ENCODE measurements at regions of chr6 and their contacts with region 1.

Region 1: GRCh38 chr6:87701676-87702588 is at the start of gene AKIRIN2:
- DNase-seq: peak; percentile 97
- ATAC-seq: peak; percentile 73
- H3K4me3 ChIP-seq: peak within 1 kb of the TSS; percentile 96
- H3K27ac ChIP-seq: peak within 1 kb of the TSS; percentile 97
- H3K4me1 ChIP-seq: peaks cover 33% of the 10 kb centered on the region
- H3K27me3 ChIP-seq: no peaks in the 10 kb centered on the region
- CTCF ChIP-seq: no peak
- EP300 ChIP-seq: no peak
- POLR2A ChIP-seq: peak; percentile 94
- RAD21 ChIP-seq: no peak
- polyA plus RNA-seq, gene AKIRIN2: 12.7 to 16.8 TPM

Region 2: GRCh38 chr6:87093651-87094050 is 608.3 kb before region 1 on chr6:
- CTCF ChIA-PET with region 1: no interaction called
- POLR2A ChIA-PET with region 1: no interaction called
- RAD21 ChIA-PET with region 1: no interaction called
- SMC1A ChIA-PET with region 1: no interaction called
- in situ Hi-C with region 1: no loop called
- intact Hi-C with region 1: no loop called
- DNase-seq: no peak
- ATAC-seq: no peak
- H3K4me3 ChIP-seq: no peak overlapping the region
- H3K27ac ChIP-seq: no peak overlapping the region
- H3K4me1 ChIP-seq: no peaks in the 10 kb centered on the region
- H3K27me3 ChIP-seq: no peaks in the 10 kb centered on the region
- CTCF ChIP-seq: no peak
- EP300 ChIP-seq: no peak
- POLR2A ChIP-seq: no peak
- RAD21 ChIP-seq: no peak

Region 3: GRCh38 chr6:87574292-87574691 is 127.6 kb before region 1 on chr6:
- CTCF ChIA-PET with region 1: no interaction called
- POLR2A ChIA-PET with region 1: no interaction called
- RAD21 ChIA-PET with region 1: no interaction called
- SMC1A ChIA-PET with region 1: no interaction called
- in situ Hi-C with region 1: no loop called
- intact Hi-C with region 1: no loop called
- DNase-seq: no peak
- ATAC-seq: peak; percentile 66
- H3K4me3 ChIP-seq: no peak overlapping the region
- H3K27ac ChIP-seq: no peak overlapping the region
- H3K4me1 ChIP-seq: peaks cover 20% of the 10 kb centered on the region
- H3K27me3 ChIP-seq: no peaks in the 10 kb centered on the region
- CTCF ChIP-seq: no peak
- EP300 ChIP-seq: no peak
- POLR2A ChIP-seq: no peak
- RAD21 ChIP-seq: no peak

Region 4: GRCh38 chr6:87669051-87669450 is 32.9 kb before region 1 on chr6:
- CTCF ChIA-PET with region 1: interaction called, 3 read pairs
- POLR2A ChIA-PET with region 1: no interaction called
- RAD21 ChIA-PET with region 1: interaction called, 7 read pairs
- SMC1A ChIA-PET with region 1: interaction called, 11 read pairs
- in situ Hi-C with region 1: no loop called
- intact Hi-C with region 1: no loop called
- DNase-seq: no peak
- ATAC-seq: peak; percentile 71
- H3K4me3 ChIP-seq: no peak overlapping the region
- H3K27ac ChIP-seq: no peak overlapping the region
- H3K4me1 ChIP-seq: peaks cover 6% of the 10 kb centered on the region; the same call in 1 of the 2 replicates
- H3K27me3 ChIP-seq: no peaks in the 10 kb centered on the region
- CTCF ChIP-seq: no peak
- EP300 ChIP-seq: no peak
- POLR2A ChIP-seq: no peak
- RAD21 ChIP-seq: no peak

Region 5: DNA sequence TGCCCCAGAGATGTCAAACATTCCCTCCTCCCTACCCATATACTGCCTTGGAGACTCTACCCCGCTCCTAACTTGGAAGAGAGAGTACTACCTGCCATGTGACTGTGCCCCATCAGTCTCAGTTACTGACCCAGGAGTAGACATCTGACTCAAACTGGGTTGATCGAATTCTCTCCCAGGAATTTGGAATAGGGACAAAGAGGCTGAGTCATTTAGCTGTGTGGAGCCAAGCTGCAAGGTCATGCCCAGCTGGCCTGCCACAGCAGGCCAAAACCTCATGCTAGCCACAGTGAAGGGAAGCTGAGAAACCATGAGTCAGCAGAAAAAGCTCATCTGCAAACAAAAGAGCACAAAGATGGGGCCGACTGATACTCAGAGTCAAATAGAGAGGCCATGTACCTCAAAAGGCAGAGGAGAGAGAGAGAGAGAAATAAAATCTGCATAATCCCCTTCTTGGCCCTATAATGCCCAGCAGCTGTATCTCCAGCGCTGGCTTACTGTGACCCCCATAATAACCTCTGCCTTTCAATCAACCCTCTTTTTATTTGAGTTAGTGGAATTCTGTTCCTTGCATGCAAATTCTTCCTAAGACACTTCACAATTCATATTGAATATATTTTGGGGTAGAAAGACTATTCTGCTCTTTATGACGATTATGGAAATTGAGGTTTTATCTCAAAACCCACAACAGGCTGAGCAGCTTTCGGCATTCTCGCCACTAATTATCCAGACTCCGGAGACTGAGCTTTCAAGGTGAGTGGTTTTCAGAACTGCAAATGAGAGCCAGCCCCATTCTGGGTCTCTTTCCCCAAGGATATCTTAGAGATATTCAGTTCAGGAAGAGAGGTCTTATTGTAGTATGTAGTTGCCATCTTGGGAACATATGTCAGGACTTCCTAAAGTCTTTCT is 21.5 kb after region 1 on chr6:
- CTCF ChIA-PET with region 1: interaction called, 13 read pairs
- POLR2A ChIA-PET with region 1: interaction called, 15 read pairs
- RAD21 ChIA-PET with region 1: interaction called, 15 read pairs
- SMC1A ChIA-PET with region 1: interaction called, 36 read pairs
- in situ Hi-C with region 1: no loop called
- intact Hi-C with region 1: loop called (anchors 1 kb)
- DNase-seq: peak; percentile 77
- ATAC-seq: peak; percentile 77
- H3K4me3 ChIP-seq: peak overlapping the region; percentile 23; the same call in 1 of the 2 replicates
- H3K27ac ChIP-seq: peak overlapping the region; percentile 92
- H3K4me1 ChIP-seq: peaks cover 38% of the 10 kb centered on the region
- H3K27me3 ChIP-seq: no peaks in the 10 kb centered on the region
- CTCF ChIP-seq: no peak
- EP300 ChIP-seq: peak; percentile 26 to 49; a peak in 2 of 4 replicates
- POLR2A ChIP-seq: no peak
- RAD21 ChIP-seq: no peak

Region 6: DNA sequence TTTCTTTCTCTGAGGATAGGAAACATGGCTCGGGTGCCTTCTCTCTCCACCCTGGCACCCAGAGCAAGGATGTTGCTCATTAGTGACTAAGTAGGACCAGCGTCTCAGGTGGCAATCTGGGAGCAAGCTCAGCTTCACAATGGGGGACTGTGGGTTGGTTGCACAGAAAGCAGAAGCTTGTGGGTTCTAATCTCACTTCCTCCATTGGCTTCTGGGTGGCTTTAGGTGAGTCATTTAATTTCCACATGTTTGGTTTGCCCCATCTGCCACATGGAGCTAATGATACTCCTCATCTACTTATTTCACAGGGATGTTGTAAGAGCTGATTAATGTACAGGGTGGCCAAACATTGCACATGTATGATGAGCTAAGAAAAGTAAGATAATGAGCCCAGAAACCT is 54.9 kb after region 1 on chr6:
- CTCF ChIA-PET with region 1: interaction called, 4 read pairs
- POLR2A ChIA-PET with region 1: interaction called, 8 read pairs
- RAD21 ChIA-PET with region 1: interaction called, 29 read pairs
- SMC1A ChIA-PET with region 1: interaction called, 26 read pairs
- in situ Hi-C with region 1: no loop called
- intact Hi-C with region 1: loop called (anchors 2 kb)
- DNase-seq: peak; percentile 97
- ATAC-seq: peak; percentile 93
- H3K4me3 ChIP-seq: no peak overlapping the region
- H3K27ac ChIP-seq: peak overlapping the region; percentile 75
- H3K4me1 ChIP-seq: peaks cover 37% of the 10 kb centered on the region
- H3K27me3 ChIP-seq: no peaks in the 10 kb centered on the region
- CTCF ChIP-seq: no peak
- EP300 ChIP-seq: peak; percentile 90 to 93
- POLR2A ChIP-seq: no peak
- RAD21 ChIP-seq: peak; percentile 16; the same call in 1 of the 2 replicates

Region 7: GRCh38 chr6:87907521-87907920 is 205.6 kb after region 1 on chr6:
- CTCF ChIA-PET with region 1: interaction called, 3 read pairs
- POLR2A ChIA-PET with region 1: interaction called, 4 read pairs
- RAD21 ChIA-PET with region 1: no interaction called
- SMC1A ChIA-PET with region 1: interaction called, 11 read pairs
- in situ Hi-C with region 1: no loop called
- intact Hi-C with region 1: loop called (anchors 5 kb)
- DNase-seq: peak; percentile 63
- ATAC-seq: peak; percentile 77
- H3K4me3 ChIP-seq: no peak overlapping the region
- H3K27ac ChIP-seq: peak overlapping the region; percentile 50; the same call in 1 of the 2 replicates
- H3K4me1 ChIP-seq: peaks cover 55% of the 10 kb centered on the region
- H3K27me3 ChIP-seq: no peaks in the 10 kb centered on the region
- CTCF ChIP-seq: no peak
- EP300 ChIP-seq: peak in 1 of 2 experiments; percentile 66; a peak in 2 of 4 replicates
- POLR2A ChIP-seq: no peak
- RAD21 ChIP-seq: 0 out of 2 replicates have a peak, but pooled peaks have one; percentile 6

Region 8: GRCh38 chr6:88870717-88871330 is 1168.9 kb after region 1 on chr6:
- CTCF ChIA-PET with region 1: interaction called, 3 read pairs
- POLR2A ChIA-PET with region 1: interaction called, 3 read pairs
- RAD21 ChIA-PET with region 1: interaction called, 8 read pairs
- SMC1A ChIA-PET with region 1: interaction called, 8 read pairs
- in situ Hi-C with region 1: no loop called
- intact Hi-C with region 1: loop called (anchors 5 kb)
- DNase-seq: peak; percentile 39
- ATAC-seq: peak; percentile 78
- H3K4me3 ChIP-seq: no peak overlapping the region
- H3K27ac ChIP-seq: no peak overlapping the region
- H3K4me1 ChIP-seq: peaks cover 10% of the 10 kb centered on the region
- H3K27me3 ChIP-seq: no peaks in the 10 kb centered on the region
- CTCF ChIP-seq: peak; percentile 46 to 70 (median 55); a peak in 5 of 6 replicates
- EP300 ChIP-seq: no peak
- POLR2A ChIP-seq: no peak
- RAD21 ChIP-seq: peak; percentile 89